ENCODE measurements at regions of chr13 and their contacts with region 1.

Region 1: GRCh38 chr13:27826379-27827353 is 34.4 kb downstream of the GSX1 start:
- DNase-seq: peak; percentile 88
- H3K4me3 ChIP-seq: peak overlapping the region in 1 of 3 experiments; percentile 30
- H3K27ac ChIP-seq: no peak overlapping the region
- H3K4me1 ChIP-seq: no peaks in the 10 kb centered on the region
- H3K27me3 ChIP-seq: peaks cover 28 to 44% of the 10 kb centered on the region in 2 experiments
- CTCF ChIP-seq: peak; percentile 85 to 93
- POLR2A ChIP-seq: no peak

Region 2: GRCh38 chr13:27374650-27375049 is 452.0 kb before region 1 on chr13:
- CTCF ChIA-PET with region 1: interaction called, 40 read pairs
- POLR2A ChIA-PET with region 1: no interaction called
- dilution Hi-C with region 1: no loop called
- intact Hi-C with region 1: loop called (anchors 1 kb)
- DNase-seq: peak; percentile 73
- H3K4me3 ChIP-seq: no peak overlapping the region
- H3K27ac ChIP-seq: no peak overlapping the region
- H3K4me1 ChIP-seq: no peaks in the 10 kb centered on the region
- H3K27me3 ChIP-seq: peaks cover 6 to 10% of the 10 kb centered on the region in 2 experiments
- CTCF ChIP-seq: peak; percentile 67 to 75
- POLR2A ChIP-seq: no peak

Region 3: GRCh38 chr13:27455331-27455855 is 371.3 kb before region 1 on chr13:
- CTCF ChIA-PET with region 1: interaction called, 20 read pairs
- POLR2A ChIA-PET with region 1: no interaction called
- dilution Hi-C with region 1: no loop called
- intact Hi-C with region 1: no loop called
- DNase-seq: no peak
- H3K4me3 ChIP-seq: no peak overlapping the region
- H3K27ac ChIP-seq: no peak overlapping the region
- H3K4me1 ChIP-seq: peaks cover 7% of the 10 kb centered on the region
- H3K27me3 ChIP-seq: peaks cover 7 to 20% of the 10 kb centered on the region in 2 experiments
- CTCF ChIP-seq: no peak
- POLR2A ChIP-seq: no peak

Region 4: GRCh38 chr13:27541386-27541785 is 285.3 kb before region 1 on chr13:
- CTCF ChIA-PET with region 1: interaction called, 484 read pairs
- POLR2A ChIA-PET with region 1: no interaction called
- dilution Hi-C with region 1: loop called (anchors 25 kb)
- intact Hi-C with region 1: no loop called
- DNase-seq: no peak
- H3K4me3 ChIP-seq: no peak overlapping the region
- H3K27ac ChIP-seq: no peak overlapping the region
- H3K4me1 ChIP-seq: no peaks in the 10 kb centered on the region
- H3K27me3 ChIP-seq: no peaks in the 10 kb centered on the region
- CTCF ChIP-seq: no peak
- POLR2A ChIP-seq: no peak

Region 5: GRCh38 chr13:27783111-27783510 is 43.6 kb before region 1 on chr13:
- CTCF ChIA-PET with region 1: interaction called, 11 read pairs
- POLR2A ChIA-PET with region 1: no interaction called
- dilution Hi-C with region 1: no loop called
- intact Hi-C with region 1: no loop called
- DNase-seq: peak; percentile 7
- H3K4me3 ChIP-seq: no peak overlapping the region
- H3K27ac ChIP-seq: no peak overlapping the region
- H3K4me1 ChIP-seq: no peaks in the 10 kb centered on the region
- H3K27me3 ChIP-seq: peaks cover 17 to 27% of the 10 kb centered on the region in 2 experiments
- CTCF ChIP-seq: peak in 1 of 2 donors; percentile 16
- POLR2A ChIP-seq: no peak

Region 6: DNA sequence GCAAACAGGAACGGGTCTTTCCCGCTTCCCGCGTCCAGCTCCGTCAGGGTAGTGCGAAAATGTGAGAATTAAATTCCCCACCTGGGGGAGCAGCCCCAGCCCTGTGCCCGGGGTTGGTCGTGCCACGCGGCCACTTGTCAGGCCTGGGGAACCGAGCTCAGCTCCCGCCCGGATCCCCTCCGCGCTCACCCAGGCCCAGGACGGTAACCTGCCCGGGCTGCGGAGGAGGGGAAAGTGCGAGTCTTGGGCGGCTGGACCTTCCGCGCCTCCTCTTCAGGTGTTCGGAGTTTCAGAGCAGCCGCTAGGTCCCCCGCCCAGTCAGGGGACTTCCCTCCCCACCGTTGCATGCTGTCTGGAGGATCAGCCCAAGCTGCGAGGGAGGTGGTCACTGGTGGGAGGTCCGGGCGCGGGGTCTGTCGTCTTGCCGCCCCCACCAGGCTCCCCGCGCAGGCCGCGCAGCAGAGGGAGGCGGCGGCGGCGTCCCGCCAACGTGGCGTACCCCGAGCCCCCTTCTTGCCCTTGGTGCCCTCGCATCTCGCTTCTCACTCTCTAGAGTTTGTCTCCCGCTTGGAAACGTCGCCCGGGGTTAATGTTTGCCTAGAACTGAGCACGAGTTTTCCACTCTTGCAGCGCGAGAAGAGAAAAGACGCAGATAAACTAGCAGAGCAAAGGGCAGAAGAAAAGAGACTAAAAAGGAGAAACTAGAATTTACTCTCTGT is 153.8 kb after region 1 on chr13:
- CTCF ChIA-PET with region 1: interaction called, 207 read pairs
- POLR2A ChIA-PET with region 1: no interaction called
- dilution Hi-C with region 1: no loop called
- intact Hi-C with region 1: loop called (anchors 1 kb)
- DNase-seq: no peak
- H3K4me3 ChIP-seq: no peak overlapping the region
- H3K27ac ChIP-seq: no peak overlapping the region
- H3K4me1 ChIP-seq: no peaks in the 10 kb centered on the region
- H3K27me3 ChIP-seq: peaks cover 64 to 74% of the 10 kb centered on the region in 2 experiments
- CTCF ChIP-seq: no peak
- POLR2A ChIP-seq: no peak

Region 7: DNA sequence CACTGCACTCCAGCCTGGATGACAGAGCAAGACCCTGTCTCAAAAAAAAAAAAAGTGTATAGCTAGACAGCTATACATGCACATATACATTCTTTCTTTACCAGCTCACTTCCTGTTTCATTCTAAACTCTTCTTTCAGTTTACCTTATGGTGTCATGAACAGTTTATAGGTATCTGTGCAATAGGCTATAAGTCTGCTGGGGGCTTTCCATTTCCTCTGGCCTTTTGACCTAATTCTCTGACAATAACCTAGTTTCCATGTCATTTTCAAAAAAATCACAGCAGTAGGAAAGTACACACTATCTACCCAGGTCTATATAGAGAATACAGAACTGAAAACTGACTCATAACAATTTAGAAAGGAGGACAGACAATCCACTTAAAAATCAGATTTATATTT is 186.2 kb after region 1 on chr13:
- CTCF ChIA-PET with region 1: no interaction called
- POLR2A ChIA-PET with region 1: no interaction called
- dilution Hi-C with region 1: no loop called
- intact Hi-C with region 1: no loop called
- DNase-seq: no peak
- H3K4me3 ChIP-seq: no peak overlapping the region
- H3K27ac ChIP-seq: no peak overlapping the region
- H3K4me1 ChIP-seq: no peaks in the 10 kb centered on the region
- H3K27me3 ChIP-seq: no peaks in the 10 kb centered on the region
- CTCF ChIP-seq: no peak
- POLR2A ChIP-seq: no peak

Region 8: DNA sequence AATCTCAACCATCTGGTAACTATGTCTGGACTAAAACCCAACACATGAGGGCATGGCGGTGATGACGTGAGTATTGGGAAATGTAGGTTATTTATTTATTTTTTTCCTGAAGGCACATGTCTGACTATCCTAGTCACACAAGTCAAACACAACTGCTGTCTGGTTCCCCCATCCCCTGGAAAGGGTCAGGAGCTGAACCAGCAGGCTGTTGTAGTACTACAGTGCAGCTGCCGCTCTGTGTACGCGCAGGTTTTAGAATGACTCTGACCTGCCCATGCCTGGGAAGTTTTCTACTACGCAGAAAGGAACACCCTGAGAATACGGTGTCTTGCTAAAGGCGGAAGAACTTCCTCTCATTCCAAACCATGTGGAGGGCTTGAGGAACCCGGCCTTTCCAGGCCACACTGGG is 1767.6 kb after region 1 on chr13:
- CTCF ChIA-PET with region 1: no interaction called
- POLR2A ChIA-PET with region 1: no interaction called
- dilution Hi-C with region 1: no loop called
- intact Hi-C with region 1: no loop called
- DNase-seq: peak; percentile 74
- H3K4me3 ChIP-seq: peak overlapping the region; percentile 66 to 93 (median 71)
- H3K27ac ChIP-seq: peak overlapping the region; percentile 91
- H3K4me1 ChIP-seq: peaks cover 20% of the 10 kb centered on the region
- H3K27me3 ChIP-seq: no peaks in the 10 kb centered on the region
- CTCF ChIP-seq: no peak
- POLR2A ChIP-seq: peak; percentile 27

Measured in endothelial cell of umbilical vein (primary cell).